ENCODE measurements at regions of chr4 and their contacts with region 1.

Region 1: GRCh38 chr4:8403173-8403753 is 37.3 kb downstream of the ACOX3 start:
- DNase-seq: peak; percentile 87 to 93 (median 90)
- ATAC-seq: peak; percentile 73 to 88 (median 84)
- H3K4me3 ChIP-seq: no peak overlapping the region
- H3K27ac ChIP-seq: peak overlapping the region; percentile 45 to 91 (median 80)
- H3K4me1 ChIP-seq: peaks cover 7 to 44% (median 27%) of the 10 kb centered on the region in 12 donors
- H3K27me3 ChIP-seq: no peaks in the 10 kb centered on the region
- CTCF ChIP-seq: peak; percentile 89 to 97 (median 94)
- POLR2A ChIP-seq: no peak

Region 2: GRCh38 chr4:7687006-7687405 is 716.3 kb before region 1 on chr4:
- intact Hi-C with region 1: no loop called
- DNase-seq: no peak
- ATAC-seq: no peak
- H3K4me3 ChIP-seq: no peak overlapping the region
- H3K27ac ChIP-seq: no peak overlapping the region
- H3K4me1 ChIP-seq: peaks cover 0 to 2% (median 0%) of the 10 kb centered on the region in 12 donors
- H3K27me3 ChIP-seq: no peaks in the 10 kb centered on the region
- CTCF ChIP-seq: no peak
- POLR2A ChIP-seq: no peak

Region 3: DNA sequence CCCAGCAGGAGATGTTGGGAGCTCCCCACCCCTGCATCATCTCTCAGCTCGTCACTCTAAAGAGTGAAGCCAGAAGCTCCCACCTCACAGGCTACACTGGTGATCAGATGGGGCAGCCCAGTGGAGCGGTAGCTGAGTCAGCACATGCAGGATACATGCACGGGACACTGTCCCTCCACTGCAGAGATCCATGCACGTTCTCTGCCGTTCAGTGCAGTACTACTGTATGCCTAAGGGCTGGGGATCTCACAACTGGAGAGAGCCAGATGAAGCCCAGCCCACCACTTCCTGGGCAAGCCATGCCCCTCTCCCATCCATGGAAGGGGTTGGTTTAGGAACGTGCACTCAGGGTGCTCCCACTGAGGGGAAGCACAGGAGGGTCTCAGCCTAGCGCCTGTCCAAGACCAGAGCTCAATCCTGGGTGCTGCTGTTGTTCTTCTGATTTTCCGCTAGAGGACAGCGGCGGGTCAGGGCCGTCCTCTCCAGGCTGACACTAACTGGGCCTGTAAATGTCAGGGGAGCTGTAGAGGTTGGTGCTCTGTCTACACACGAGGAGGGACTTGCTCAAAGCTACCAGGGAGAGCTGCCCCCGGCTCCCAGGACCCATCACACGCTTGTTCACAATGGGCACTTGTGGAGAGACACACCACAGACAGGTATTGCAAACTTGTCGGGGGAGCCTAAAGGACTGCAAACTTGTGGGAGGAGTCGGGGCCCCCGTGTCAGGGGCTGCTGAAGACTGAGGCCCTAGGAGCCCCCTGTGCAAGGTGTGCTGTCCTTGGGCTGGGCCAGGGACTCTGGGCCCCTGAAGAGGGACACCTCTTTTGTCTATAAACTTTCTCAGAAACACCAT is 226.5 kb before region 1 on chr4:
- intact Hi-C with region 1: loop called in 7 of 10 experiments (anchors 5 to 10 kb)
- DNase-seq: peak; percentile 60 to 74 (median 66)
- ATAC-seq: peak; percentile 72 to 88 (median 80)
- H3K4me3 ChIP-seq: no peak overlapping the region
- H3K27ac ChIP-seq: no peak overlapping the region
- H3K4me1 ChIP-seq: peaks cover 2 to 26% (median 16%) of the 10 kb centered on the region in 12 donors
- H3K27me3 ChIP-seq: no peaks in the 10 kb centered on the region
- CTCF ChIP-seq: peak; percentile 77 to 90 (median 84)
- POLR2A ChIP-seq: no peak

Region 4: GRCh38 chr4:8260656-8261111 is 142.6 kb before region 1 on chr4:
- intact Hi-C with region 1: loop called in 2 of 10 experiments (anchors 5 kb)
- DNase-seq: no peak
- ATAC-seq: no peak
- H3K4me3 ChIP-seq: no peak overlapping the region
- H3K27ac ChIP-seq: peak overlapping the region in 2 of 12 donors; percentile 1 to 58
- H3K4me1 ChIP-seq: peaks cover 0 to 17% (median 0%) of the 10 kb centered on the region in 12 donors
- H3K27me3 ChIP-seq: no peaks in the 10 kb centered on the region
- CTCF ChIP-seq: no peak
- POLR2A ChIP-seq: no peak

Region 5: GRCh38 chr4:8274765-8275547 is 128.3 kb before region 1 on chr4:
- intact Hi-C with region 1: loop called in 4 of 10 experiments (anchors 1 to 2 kb)
- DNase-seq: peak; percentile 86 to 94 (median 93)
- ATAC-seq: peak; percentile 70 to 80 (median 74)
- H3K4me3 ChIP-seq: no peak overlapping the region
- H3K27ac ChIP-seq: peak overlapping the region in 11 of 12 donors; percentile 37 to 83 (median 69)
- H3K4me1 ChIP-seq: peaks cover 0 to 94% (median 80%) of the 10 kb centered on the region in 12 donors
- H3K27me3 ChIP-seq: no peaks in the 10 kb centered on the region
- CTCF ChIP-seq: peak in 10 of 12 donors; percentile 16 to 65 (median 39)
- POLR2A ChIP-seq: no peak

Region 6: GRCh38 chr4:8330821-8331574 is 72.3 kb before region 1 on chr4:
- intact Hi-C with region 1: loop called in 3 of 10 experiments (anchors 2 to 10 kb)
- DNase-seq: peak; percentile 47 to 88 (median 86)
- ATAC-seq: peak; percentile 94 to 97 (median 96)
- H3K4me3 ChIP-seq: no peak overlapping the region
- H3K27ac ChIP-seq: peak overlapping the region in 11 of 12 donors; percentile 1 to 85 (median 60)
- H3K4me1 ChIP-seq: peaks cover 2 to 21% (median 15%) of the 10 kb centered on the region in 12 donors
- H3K27me3 ChIP-seq: no peaks in the 10 kb centered on the region
- CTCF ChIP-seq: peak in 8 of 12 donors; percentile 17 to 38 (median 22)
- POLR2A ChIP-seq: no peak